Activated T-helper 1 cell treated with anti-CD3 and anti-CD28 coated beads, Interleukin-12 subunit alpha, Interleukin-12 subunit beta, Interleukin-2, Interleukin-4 antibody, amounts not matched to agents 30 ng/mL and 10 ng/mL and 1 ng/mL, durations not matched to agents 14 hours and 24 hours and 36 hours (primary cell): ENCODE measurements at regions of chr7 and their contacts with region 1.

Region 1: GRCh38 chr7:26291699-26292538 is at the start of gene SNX10:
- DNase-seq: peak; percentile 63
- H3K4me3 Mint-ChIP-seq: peak within 1 kb of the TSS; percentile 92
- H3K27ac Mint-ChIP-seq: peak within 1 kb of the TSS; percentile 92
- H3K4me1 Mint-ChIP-seq: peaks cover 40% of the 10 kb centered on the region
- H3K27me3 Mint-ChIP-seq: no peaks in the 10 kb centered on the region
- total RNA-seq, gene SNX10: 41.9 and 48.3 TPM in 2 replicates

Region 2: GRCh38 chr7:25894902-25895791 is 396.8 kb before region 1 on chr7:
- intact Hi-C with region 1: loop called (anchors 2 kb)
- DNase-seq: peak; percentile 51
- H3K4me3 Mint-ChIP-seq: peak overlapping the region; percentile 3
- H3K27ac Mint-ChIP-seq: no peak overlapping the region
- H3K4me1 Mint-ChIP-seq: peaks cover 33% of the 10 kb centered on the region
- H3K27me3 Mint-ChIP-seq: peaks cover 6% of the 10 kb centered on the region

Region 3: GRCh38 chr7:26200444-26201246 is 91.3 kb before region 1 on chr7 and contains the start of gene HNRNPA2B1:
- intact Hi-C with region 1: loop called (anchors 1 kb)
- DNase-seq: peak; percentile 97
- H3K4me3 Mint-ChIP-seq: peak within 1 kb of the TSS; percentile 100
- H3K27ac Mint-ChIP-seq: peak within 1 kb of the TSS; percentile 100
- H3K4me1 Mint-ChIP-seq: peaks cover 47% of the 10 kb centered on the region
- H3K27me3 Mint-ChIP-seq: no peaks in the 10 kb centered on the region
- total RNA-seq, gene HNRNPA2B1: 821 and 823 TPM in 2 replicates

Region 4: DNA sequence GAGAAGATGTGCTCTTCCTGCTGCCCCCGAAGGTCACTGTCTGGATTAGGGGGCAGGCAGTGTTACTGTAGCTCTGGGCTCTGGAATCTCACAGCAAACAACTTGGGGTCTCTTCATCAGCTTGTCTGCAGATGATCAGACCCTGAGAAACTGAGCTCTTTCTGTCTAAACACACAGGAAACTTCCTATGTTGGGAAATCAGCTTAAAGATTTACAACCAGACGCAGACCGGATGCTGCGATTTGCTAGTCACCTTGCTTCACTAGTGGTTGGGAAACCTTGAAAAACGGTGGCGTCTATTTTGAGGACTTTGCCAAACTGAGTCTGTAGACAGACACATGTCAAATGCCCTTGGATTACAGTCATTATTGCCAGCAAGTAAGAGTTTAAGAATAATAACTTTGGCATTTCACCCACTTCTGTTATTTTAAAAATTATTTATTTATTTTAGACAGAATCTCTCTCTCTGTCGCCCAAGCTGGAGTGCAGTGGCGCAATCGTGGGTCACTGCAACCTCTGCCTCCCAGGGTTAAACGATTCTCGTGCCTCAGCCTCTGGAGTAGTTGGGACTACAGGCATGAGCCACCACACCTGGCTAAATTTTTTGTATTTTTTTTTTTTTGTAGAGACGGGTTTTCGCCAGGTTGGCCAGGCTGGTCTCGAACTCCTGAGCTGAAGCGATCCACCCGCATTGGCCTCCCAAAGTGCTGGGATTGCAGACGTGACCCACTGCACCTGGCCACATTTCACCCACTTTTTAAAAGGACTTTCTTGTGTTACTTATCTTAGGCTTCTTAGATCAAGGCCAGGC is 13.7 kb after region 1 on chr7:
- intact Hi-C with region 1: loop called (anchors 1 kb)
- DNase-seq: no peak
- H3K4me3 Mint-ChIP-seq: peak overlapping the region; percentile 12
- H3K27ac Mint-ChIP-seq: peak overlapping the region; percentile 74
- H3K4me1 Mint-ChIP-seq: peaks cover 23% of the 10 kb centered on the region
- H3K27me3 Mint-ChIP-seq: no peaks in the 10 kb centered on the region

Region 5: GRCh38 chr7:26667500-26668133 is 375.7 kb after region 1 on chr7:
- intact Hi-C with region 1: loop called (anchors 1 kb)
- DNase-seq: peak; percentile 47
- H3K4me3 Mint-ChIP-seq: no peak overlapping the region
- H3K27ac Mint-ChIP-seq: no peak overlapping the region
- H3K4me1 Mint-ChIP-seq: peaks cover 16% of the 10 kb centered on the region
- H3K27me3 Mint-ChIP-seq: peaks cover 39% of the 10 kb centered on the region

Region 6: DNA sequence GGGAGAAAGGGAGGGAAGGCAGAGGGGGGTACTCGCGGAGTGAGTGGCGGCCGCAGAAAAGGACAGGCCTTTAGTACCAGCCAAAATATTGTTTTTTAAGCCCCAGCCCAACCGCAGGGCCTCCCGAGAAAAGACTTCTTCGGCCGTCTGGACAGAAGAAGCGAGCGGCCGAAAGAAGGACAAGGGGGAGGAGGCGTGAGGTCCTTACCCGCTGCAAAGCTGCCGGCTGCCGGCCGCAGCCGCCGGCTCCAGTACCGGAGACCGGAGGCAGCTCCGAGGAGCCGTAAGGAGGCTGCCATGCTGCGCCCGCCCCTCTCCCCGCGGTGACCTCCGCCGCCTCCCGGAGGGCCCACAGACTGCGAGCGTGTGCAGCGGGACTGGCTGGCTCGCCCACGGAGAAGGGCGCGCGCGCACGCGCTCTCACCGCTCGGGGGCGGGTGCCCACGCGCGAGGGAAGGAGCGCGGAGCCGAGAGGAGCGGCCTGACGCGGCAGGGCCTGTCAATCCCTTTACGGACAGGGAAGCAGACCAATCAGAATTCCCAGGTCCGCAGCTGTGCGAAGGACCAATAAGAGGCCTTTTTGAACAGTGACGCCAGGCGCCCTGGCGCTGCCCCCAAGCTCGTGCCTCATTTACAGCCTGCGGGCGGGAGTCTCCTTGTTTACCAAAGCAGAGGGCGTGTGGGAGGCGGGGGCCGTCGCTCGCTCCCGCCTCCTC is 1370.7 kb after region 1 on chr7 and contains the start of gene HIBADH:
- intact Hi-C with region 1: loop called (anchors 2 kb)
- DNase-seq: peak; percentile 96
- H3K4me3 Mint-ChIP-seq: peak within 1 kb of the TSS; percentile 86
- H3K27ac Mint-ChIP-seq: peak within 1 kb of the TSS; percentile 81
- H3K4me1 Mint-ChIP-seq: peaks cover 30% of the 10 kb centered on the region
- H3K27me3 Mint-ChIP-seq: no peaks in the 10 kb centered on the region
- total RNA-seq, gene HIBADH: 21.0 and 21.2 TPM in 2 replicates